Activated CD4-positive, alpha-beta T cell treated with anti-CD3 and anti-CD28 coated beads, Interleukin-2, amount 10 ng/mL, durations not matched to agents 24 days and 14 days (primary cell): ENCODE measurements at regions of chr22 and their contacts with region 1.

Region 1: GRCh38 chr22:38506118-38506962 is at the start of gene DDX17:
- DNase-seq: peak; percentile 98
- H3K4me3 Mint-ChIP-seq: peak within 1 kb of the TSS; percentile 99
- H3K27ac Mint-ChIP-seq: peak within 1 kb of the TSS; percentile 99
- H3K4me1 Mint-ChIP-seq: peaks cover 40% of the 10 kb centered on the region
- H3K27me3 Mint-ChIP-seq: no peaks in the 10 kb centered on the region
- total RNA-seq, gene DDX17: 373 and 374 TPM in 2 replicates

Region 2: GRCh38 chr22:38398609-38399461 is 107.5 kb before region 1 on chr22:
- intact Hi-C with region 1: loop called (anchors 2 kb)
- DNase-seq: peak; percentile 95
- H3K4me3 Mint-ChIP-seq: peak overlapping the region; percentile 85
- H3K27ac Mint-ChIP-seq: peak overlapping the region; percentile 66
- H3K4me1 Mint-ChIP-seq: peaks cover 31% of the 10 kb centered on the region
- H3K27me3 Mint-ChIP-seq: peaks cover 23% of the 10 kb centered on the region

Region 3: DNA sequence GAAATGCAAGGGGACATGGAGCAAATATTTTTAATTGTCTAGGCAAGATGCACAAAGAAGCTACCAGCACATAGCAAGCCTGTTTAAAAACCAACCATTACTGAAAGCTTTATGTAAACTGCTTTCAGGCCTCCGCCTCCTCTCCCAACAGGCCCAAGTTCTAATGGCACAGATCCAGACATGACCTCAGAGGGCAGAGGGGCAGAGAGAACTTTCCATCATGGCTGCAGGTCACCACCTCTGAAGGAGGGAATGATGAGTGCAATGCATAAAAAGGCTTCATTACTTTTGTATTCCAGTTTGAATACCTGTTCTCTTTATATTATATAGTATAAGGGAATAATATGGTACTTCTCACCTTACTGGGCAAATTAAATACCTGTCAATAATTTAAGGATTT is 15.4 kb before region 1 on chr22:
- intact Hi-C with region 1: loop called (anchors 2 kb)
- DNase-seq: no peak
- H3K4me3 Mint-ChIP-seq: no peak overlapping the region
- H3K27ac Mint-ChIP-seq: peak overlapping the region; percentile 84
- H3K4me1 Mint-ChIP-seq: peaks cover 35% of the 10 kb centered on the region
- H3K27me3 Mint-ChIP-seq: no peaks in the 10 kb centered on the region

Region 4: DNA sequence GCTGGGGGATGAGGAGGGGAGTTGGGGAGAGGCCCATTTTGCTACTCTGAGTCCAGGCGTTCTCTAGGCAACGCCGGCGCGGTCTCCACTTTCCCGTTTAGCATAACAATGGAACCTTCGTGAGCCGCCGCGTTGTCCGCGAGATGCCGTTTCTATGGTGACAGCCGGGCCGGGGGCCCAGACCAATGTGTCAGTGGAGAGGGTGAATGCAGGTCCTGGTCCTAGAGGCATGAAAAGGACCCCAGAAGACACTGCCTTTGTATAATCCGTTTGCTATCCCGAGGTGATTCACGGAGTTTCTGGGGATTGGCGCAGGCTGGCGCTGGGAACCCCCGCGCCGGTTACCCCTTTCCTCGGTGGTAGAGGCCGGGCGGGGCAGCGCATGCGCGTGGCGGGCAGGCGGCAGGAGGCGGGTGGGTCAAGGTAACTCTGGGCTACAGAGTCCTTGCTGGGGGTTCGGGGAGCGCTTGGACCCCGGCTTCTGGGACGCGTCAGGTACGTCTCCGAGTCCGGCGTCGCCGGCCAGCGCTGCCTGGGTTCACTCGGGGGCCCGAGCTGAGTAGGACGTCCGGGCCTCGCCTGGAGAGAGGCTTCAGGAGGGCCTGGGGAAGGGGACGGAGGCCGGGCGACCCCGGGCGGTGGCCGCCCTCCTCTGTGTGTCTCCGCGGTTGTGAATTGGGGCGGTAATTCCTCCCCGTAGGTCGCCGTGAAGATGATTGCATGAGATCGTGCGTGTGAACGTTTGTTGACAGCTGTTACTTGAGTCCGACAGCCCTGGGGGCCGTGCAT is 150.1 kb after region 1 on chr22 and contains the starts of genes CBY1 and FAM227A:
- intact Hi-C with region 1: loop called (anchors 1 kb)
- DNase-seq: peak; percentile 96
- H3K4me3 Mint-ChIP-seq: peak within 1 kb of the TSS; percentile 93
- H3K27ac Mint-ChIP-seq: peak within 1 kb of the TSS; percentile 97
- H3K4me1 Mint-ChIP-seq: peaks cover 11% of the 10 kb centered on the region
- H3K27me3 Mint-ChIP-seq: no peaks in the 10 kb centered on the region
- total RNA-seq, gene CBY1: 8.4 and 13.3 TPM in 2 replicates
- total RNA-seq, gene FAM227A: 0.30 and 0.71 TPM in 2 replicates